GM10248 (cell line): ENCODE measurements at regions of chr6 and their contacts with region 1.

Region 1: GRCh38 chr6:22071270-22072041 is 225.4 kb downstream of the PRL start:
- DNase-seq: no peak
- CTCF ChIP-seq: no peak

Region 2: GRCh38 chr6:20620043-20620442 is 1451.4 kb before region 1 on chr6:
- CTCF ChIA-PET with region 1: no interaction called
- POLR2A ChIA-PET with region 1: interaction called, 11 read pairs
- DNase-seq: no peak
- CTCF ChIP-seq: no peak